Right ventricle myocardium superior (tissue), 1 donor: ENCODE measurements at regions of chr17 and their contacts with region 1.

Region 1: DNA sequence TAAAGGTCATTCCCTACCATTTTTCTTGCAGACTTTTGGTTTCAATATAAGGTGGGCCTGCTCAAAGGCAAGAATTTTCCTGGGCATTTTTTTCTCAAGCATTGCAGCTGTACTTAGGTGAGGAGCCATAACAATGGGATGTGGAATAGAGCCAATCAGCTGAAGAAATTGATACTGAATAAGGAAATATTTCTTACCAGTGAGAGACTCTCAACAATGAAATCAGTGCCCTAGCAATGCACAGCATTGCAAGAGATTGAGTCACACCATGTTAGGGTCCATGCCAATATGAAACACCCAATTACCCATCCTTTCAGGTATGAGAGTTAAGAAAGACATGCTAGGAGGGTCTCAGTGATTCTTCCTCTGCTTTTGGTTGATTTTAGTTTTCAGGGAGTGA is 237.6 kb downstream of the SOX9 start:
- DNase-seq: no peak
- ATAC-seq: no peak

Region 2: DNA sequence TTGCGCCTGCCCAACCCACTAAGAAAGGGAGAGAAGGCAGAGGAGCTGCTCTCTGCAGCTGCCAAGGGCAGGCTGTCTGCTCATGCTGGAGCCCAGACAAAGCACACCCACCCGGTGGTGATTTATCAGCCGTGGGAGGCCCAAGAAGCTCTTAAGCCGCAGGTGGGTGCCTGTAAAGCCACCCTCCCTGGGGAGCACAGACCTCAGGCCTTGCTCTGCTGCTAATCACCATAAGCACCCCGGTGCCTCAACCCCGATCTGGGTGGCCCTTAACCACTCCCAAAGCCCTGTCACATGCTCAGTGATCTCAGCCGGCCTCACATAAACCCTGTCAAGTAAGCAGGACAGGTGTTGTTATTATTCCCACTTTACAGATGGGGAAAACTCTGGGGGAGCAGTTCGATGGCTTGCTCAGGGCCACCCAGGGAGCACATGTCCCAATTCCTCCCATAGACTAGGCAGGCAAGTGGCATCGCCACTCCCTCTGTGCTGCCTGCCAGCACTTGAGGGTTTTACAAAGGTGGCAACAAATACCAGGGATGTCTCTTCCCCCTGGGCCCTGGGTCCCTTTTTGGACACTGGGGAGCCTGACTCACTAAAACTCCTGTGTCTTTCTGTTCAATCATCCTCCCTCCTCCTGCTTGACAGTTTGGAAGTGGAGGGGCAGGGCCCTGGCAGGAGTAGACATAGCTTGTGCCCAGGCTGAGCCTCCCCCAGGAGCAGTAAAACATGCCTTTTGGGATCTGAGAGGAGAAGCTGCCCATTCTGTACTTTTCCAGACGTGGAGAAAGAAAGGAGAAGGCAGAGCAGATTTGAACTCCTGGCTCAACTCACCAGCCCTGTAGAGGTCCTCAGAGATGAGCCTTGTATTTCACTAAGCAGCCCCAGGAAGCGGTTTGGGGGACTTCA is 61.7 kb after region 1 on chr17:
- intact Hi-C with region 1: loop called (anchors 10 kb)
- DNase-seq: no peak
- ATAC-seq: no peak